Gastrocnemius medialis (tissue), 4 donors: ENCODE measurements at regions of chr7 and their contacts with region 1.

Region 1: GRCh38 chr7:6385110-6385971 is 62.4 kb downstream of the DAGLB start:
- DNase-seq: no peak
- ATAC-seq: peak; percentile 45 to 46
- H3K4me3 ChIP-seq: no peak overlapping the region
- H3K27ac ChIP-seq: peak overlapping the region; percentile 59 to 67 (median 62)
- H3K4me1 ChIP-seq: peaks cover 49 to 70% of the 10 kb centered on the region in 2 donors
- H3K27me3 ChIP-seq: no peaks in the 10 kb centered on the region
- CTCF ChIP-seq: no peak
- POLR2A ChIP-seq: no peak

Region 2: DNA sequence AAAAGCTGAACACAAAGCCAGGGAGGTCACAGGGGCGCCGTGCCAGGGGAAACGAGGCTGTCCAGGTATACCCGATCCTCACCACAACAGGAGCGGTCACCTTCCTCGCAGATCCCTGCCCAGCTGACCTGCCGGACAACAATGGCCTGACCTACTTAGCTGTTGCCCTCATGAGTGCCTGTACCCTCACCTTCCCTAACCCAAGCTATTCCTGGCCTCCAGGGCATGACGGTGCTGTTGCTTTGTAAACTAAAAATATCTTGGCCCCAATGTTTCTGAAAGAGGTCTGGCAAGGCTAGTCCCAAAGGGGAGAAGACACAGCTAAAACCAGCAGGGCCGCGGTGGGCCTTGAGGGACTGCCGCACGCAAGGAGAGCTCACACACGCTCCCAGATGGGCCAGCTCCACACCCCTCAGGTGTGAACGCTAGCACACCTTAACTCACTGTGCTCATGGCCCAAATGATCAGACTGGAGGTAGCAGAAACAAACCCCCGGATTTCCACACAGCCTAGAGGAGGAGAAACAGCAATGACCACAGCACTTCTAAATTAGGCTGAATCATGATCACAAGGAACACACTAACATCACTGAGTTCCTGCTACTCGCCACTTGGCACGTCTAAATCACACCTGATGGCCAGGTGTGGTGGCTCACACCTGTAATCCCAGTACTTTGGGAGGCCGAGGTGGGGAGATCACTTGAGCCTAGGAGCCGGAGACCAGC is 46.6 kb before region 1 on chr7:
- in situ Hi-C with region 1: no loop called
- intact Hi-C with region 1: no loop called
- DNase-seq: peak; percentile 91 to 96
- ATAC-seq: peak; percentile 95 to 96
- H3K4me3 ChIP-seq: peak overlapping the region in 3 of 4 donors; percentile 12 to 20 (median 18)
- H3K27ac ChIP-seq: peak overlapping the region; percentile 88 to 96 (median 94)
- H3K4me1 ChIP-seq: peaks cover 14 to 16% of the 10 kb centered on the region in 2 donors
- H3K27me3 ChIP-seq: no peaks in the 10 kb centered on the region
- CTCF ChIP-seq: no peak
- POLR2A ChIP-seq: peak; percentile 48 to 73

Region 3: DNA sequence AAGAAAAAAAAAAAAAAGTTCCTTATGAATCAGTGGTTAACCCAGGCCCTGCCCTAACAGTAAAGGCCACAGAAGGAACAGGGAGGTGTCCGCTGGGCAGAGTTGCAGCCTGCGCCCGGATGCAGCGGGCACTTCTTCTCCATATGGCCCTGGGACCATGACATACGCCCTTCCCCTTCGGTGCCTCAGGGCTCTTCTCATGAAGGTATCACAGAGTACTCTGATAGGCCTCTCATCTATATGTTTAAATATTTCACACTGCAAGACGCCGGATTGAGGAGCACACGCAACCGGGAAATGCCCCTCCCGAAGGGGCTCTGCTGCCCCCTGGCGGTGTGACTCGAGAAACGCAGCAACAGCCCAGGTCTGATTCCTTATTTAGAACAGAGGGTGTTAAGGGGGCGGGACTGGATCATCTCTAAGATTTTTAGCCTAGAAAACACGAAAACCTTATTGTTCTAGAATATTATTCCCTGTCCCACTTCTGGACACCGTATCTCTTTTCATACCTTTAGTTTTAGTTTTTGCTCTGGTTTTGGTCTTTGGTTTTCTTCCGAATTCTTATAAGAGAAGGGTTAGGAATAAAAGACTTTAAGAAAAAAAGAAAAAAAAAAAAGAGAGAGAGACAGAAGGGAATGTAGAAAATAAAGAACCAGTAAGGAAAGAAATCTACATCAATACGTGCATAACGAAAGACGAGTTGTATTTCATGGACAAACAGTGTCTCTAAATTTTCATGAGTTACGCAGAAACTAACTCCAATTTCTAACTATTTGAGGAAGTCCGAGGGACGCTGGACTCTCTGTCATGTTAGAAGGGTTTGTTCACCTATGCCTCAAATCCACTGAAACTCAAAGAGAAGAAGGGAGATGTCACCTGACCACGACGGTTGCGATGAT is 50.4 kb after region 1 on chr7:
- in situ Hi-C with region 1: loop called in 1 of 4 experiments (anchors 10 kb)
- intact Hi-C with region 1: no loop called
- DNase-seq: peak; percentile 61 to 72
- ATAC-seq: peak; percentile 51 to 54
- H3K4me3 ChIP-seq: no peak overlapping the region
- H3K27ac ChIP-seq: peak overlapping the region; percentile 83 to 86 (median 84)
- H3K4me1 ChIP-seq: peaks cover 48 to 58% of the 10 kb centered on the region in 2 donors
- H3K27me3 ChIP-seq: no peaks in the 10 kb centered on the region
- CTCF ChIP-seq: peak; percentile 93 to 96 (median 93)
- POLR2A ChIP-seq: no peak